ENCODE measurements at regions of chr12 and their contacts with region 1.

Region 1: DNA sequence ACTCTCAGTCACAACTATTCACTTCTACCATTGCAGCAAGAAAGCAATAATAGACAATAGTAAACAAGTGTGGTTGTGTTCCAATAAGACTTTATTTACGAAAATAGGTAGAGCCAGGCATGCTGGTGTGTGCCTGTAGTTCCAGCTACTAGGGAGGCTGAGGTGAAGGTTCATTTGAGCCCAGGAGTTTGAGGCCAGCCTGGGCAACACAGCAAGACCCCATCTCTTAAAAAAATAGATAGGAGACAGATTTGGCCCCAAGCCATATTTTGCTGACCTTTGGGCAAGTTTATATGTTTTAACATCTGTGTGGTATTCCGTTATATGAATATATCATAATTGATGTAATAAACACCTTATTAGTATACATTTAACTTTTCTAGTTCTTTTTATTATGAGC is 14.1 kb downstream of the ACAD10 start:
- DNase-seq: no peak
- ATAC-seq: no peak
- H3K4me3 ChIP-seq: no peak overlapping the region
- H3K4me3 Mint-ChIP-seq: no peak overlapping the region
- H3K27ac ChIP-seq: no peak overlapping the region
- H3K27ac Mint-ChIP-seq: no peak overlapping the region
- H3K4me1 ChIP-seq: no peaks in the 10 kb centered on the region
- H3K4me1 Mint-ChIP-seq: no peaks in the 10 kb centered on the region
- H3K27me3 ChIP-seq: no peaks in the 10 kb centered on the region
- H3K27me3 Mint-ChIP-seq: no peaks in the 10 kb centered on the region
- CTCF ChIP-seq: no peak

Region 2: DNA sequence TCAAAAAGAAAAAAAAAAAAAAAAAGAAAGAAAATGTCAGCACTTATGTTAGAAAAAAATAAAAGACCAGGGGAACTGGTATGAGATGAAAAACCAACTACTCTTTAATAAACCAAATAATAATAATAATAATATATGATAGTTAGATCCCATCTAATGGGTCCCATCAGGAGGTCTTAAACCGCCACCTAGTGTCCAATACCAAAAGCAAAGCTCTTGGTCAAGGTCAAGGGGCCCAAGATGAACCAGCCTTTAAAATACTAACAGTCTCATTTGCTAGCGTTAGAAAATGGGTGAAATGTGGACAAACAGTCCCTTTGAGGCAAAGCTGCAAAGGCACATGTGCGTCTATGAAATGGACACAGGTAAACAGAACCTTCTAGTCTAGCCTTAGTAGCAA is 26.5 kb before region 1 on chr12:
- CTCF ChIA-PET with region 1: no interaction called
- POLR2A ChIA-PET with region 1: interaction called, 5 read pairs
- intact Hi-C with region 1: loop called in 1 of 2 experiments (anchors 1 kb)
- DNase-seq: peak in 1 of 9 experiments; percentile 14
- ATAC-seq: no peak
- H3K4me3 ChIP-seq: no peak overlapping the region
- H3K4me3 Mint-ChIP-seq: no peak overlapping the region
- H3K27ac ChIP-seq: no peak overlapping the region
- H3K27ac Mint-ChIP-seq: no peak overlapping the region
- H3K4me1 ChIP-seq: no peaks in the 10 kb centered on the region
- H3K4me1 Mint-ChIP-seq: peaks cover 2% of the 10 kb centered on the region
- H3K27me3 ChIP-seq: no peaks in the 10 kb centered on the region
- H3K27me3 Mint-ChIP-seq: no peaks in the 10 kb centered on the region
- CTCF ChIP-seq: no peak

Region 3: DNA sequence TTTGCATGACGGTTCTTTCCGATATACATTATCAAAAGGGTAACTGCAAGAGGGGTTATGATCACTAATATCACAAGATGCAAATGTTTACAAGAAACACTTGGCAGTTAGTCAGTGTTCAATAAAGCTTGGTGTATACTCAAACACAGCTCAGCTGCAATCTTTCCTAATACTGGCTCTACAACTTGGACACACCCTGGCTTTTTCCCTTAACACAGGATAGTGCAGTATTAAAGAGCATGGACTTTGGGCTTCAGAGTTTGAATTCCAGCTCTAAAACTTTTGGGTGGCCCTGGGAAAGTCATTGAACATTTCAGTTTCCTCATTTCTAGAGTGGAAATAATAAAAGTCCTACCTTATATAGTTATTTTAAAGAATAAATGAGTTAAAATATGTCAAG is 575.2 kb after region 1 on chr12:
- CTCF ChIA-PET with region 1: no interaction called
- POLR2A ChIA-PET with region 1: no interaction called
- intact Hi-C with region 1: no loop called
- DNase-seq: no peak
- ATAC-seq: no peak
- H3K4me3 ChIP-seq: no peak overlapping the region
- H3K4me3 Mint-ChIP-seq: no peak overlapping the region
- H3K27ac ChIP-seq: no peak overlapping the region
- H3K27ac Mint-ChIP-seq: no peak overlapping the region
- H3K4me1 ChIP-seq: no peaks in the 10 kb centered on the region
- H3K4me1 Mint-ChIP-seq: no peaks in the 10 kb centered on the region
- H3K27me3 ChIP-seq: no peaks in the 10 kb centered on the region
- H3K27me3 Mint-ChIP-seq: no peaks in the 10 kb centered on the region
- CTCF ChIP-seq: no peak